ENCODE measurements at regions of chr9 and their contacts with region 1.

Region 1: DNA sequence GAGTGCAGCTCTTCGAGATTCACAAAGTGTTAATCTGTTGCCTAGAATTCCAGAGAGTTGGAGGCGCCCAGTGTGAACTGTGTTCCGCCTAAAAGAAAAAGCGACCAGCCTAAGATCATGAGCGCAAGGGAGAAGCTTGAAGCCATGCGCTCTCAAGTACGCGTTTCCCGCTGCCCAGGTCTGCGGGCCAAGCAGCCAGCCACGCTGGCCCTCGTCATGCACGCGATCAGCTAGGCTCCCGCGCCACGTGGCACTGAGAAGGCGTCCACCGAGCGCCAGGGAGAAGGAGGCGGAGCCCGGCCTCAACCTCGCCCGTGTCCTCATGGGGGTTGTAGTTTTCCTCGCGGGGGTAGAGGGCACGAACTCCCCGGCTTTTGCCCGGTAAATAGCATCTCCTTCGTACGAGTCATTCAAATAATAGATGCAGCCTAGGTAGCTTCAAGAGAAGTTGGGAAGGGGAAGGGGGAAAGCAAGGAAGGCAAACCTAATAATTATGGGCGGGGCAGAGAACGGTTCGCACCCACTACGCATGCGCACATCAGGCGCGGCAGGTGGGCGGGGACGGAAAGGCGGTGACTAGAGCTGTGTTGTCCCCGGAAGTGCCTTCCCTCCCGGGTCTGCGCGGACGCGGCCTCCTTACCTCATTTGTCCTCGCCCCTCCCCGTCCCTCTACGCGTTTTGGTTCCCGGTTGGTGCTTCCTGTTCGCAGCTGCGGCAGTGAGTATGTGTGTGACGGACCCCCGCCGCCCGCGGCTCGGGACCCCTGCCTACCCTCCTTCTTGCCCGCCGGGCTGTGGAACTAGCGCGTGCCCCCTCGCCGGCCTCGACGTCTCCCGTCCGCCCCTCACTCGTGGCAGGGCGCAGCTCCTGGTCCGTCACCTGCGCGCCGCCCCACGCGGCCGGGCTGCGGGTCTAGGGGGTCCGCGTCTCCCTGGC is at the start of gene ZCCHC7:
- DNase-seq: peak; percentile 98
- ATAC-seq: peak; percentile 98
- H3K4me3 Mint-ChIP-seq: peak within 1 kb of the TSS; percentile 89
- H3K27ac Mint-ChIP-seq: peak within 1 kb of the TSS; percentile 99
- H3K4me1 Mint-ChIP-seq: peaks cover 33% of the 10 kb centered on the region
- H3K27me3 Mint-ChIP-seq: no peaks in the 10 kb centered on the region
- CTCF ChIP-seq: no peak
- total RNA-seq, gene ZCCHC7: 32.9 to 37.0 TPM

Region 2: DNA sequence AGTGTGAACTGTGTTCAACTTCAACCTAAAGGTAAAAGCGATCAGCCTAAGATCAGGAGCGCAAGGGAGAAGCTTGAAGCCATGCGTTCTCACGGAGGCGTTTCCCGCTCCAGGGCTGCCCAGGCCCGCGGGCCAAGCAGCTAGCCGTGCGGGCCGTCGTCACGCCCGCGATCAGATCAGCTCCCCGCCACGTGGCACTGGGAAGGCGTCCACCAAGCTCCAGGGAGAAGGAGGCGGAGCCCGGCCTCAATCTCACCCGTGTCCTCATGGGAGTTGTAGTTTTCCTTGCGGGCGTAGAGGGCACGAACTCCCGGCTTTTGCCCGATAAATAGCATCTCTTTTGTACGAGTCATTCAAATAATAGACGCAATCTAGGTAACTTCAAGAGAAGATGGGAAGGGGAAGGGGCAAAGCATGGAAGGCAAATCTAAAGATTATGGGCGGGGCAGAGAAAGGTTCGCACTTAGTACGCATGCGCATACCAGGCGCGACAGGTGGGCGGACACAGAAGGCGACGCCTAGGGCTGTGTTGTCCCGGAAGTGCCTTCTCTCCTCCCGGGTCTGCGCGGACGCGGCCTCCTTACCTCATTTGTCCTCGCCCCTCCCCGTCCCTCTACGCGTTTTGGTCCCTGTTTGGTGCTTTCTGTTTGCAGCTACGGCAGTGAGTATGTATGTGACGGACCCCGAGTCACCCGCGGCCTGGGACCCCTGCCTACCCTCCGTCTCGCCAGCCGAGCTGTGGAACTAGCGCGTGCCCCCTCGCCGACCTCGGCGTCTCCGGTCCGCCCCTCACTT is 40.6 kb before region 1 on chr9:
- CTCF ChIA-PET with region 1: interaction called, 3 read pairs
- POLR2A ChIA-PET with region 1: interaction called, 14 read pairs
- intact Hi-C with region 1: no loop called
- DNase-seq: peak; percentile 98
- ATAC-seq: peak; percentile 98
- H3K4me3 Mint-ChIP-seq: peak overlapping the region; percentile 96
- H3K27ac Mint-ChIP-seq: peak overlapping the region; percentile 96
- H3K4me1 Mint-ChIP-seq: peaks cover 39% of the 10 kb centered on the region
- H3K27me3 Mint-ChIP-seq: peaks cover 3% of the 10 kb centered on the region
- CTCF ChIP-seq: no peak

Region 3: GRCh38 chr9:37144762-37145161 is 24.6 kb after region 1 on chr9:
- CTCF ChIA-PET with region 1: no interaction called
- POLR2A ChIA-PET with region 1: no interaction called
- intact Hi-C with region 1: no loop called
- DNase-seq: no peak
- ATAC-seq: no peak
- H3K4me3 Mint-ChIP-seq: no peak overlapping the region
- H3K27ac Mint-ChIP-seq: peak overlapping the region; percentile 64
- H3K4me1 Mint-ChIP-seq: peaks cover 42% of the 10 kb centered on the region
- H3K27me3 Mint-ChIP-seq: no peaks in the 10 kb centered on the region
- CTCF ChIP-seq: no peak

Region 4: GRCh38 chr9:37293664-37294524 is 173.7 kb after region 1 on chr9:
- CTCF ChIA-PET with region 1: no interaction called
- POLR2A ChIA-PET with region 1: interaction called, 3 read pairs
- intact Hi-C with region 1: loop called (anchors 10 kb)
- DNase-seq: no peak
- ATAC-seq: no peak
- H3K4me3 Mint-ChIP-seq: no peak overlapping the region
- H3K27ac Mint-ChIP-seq: peak overlapping the region; percentile 82
- H3K4me1 Mint-ChIP-seq: peaks cover 78% of the 10 kb centered on the region
- H3K27me3 Mint-ChIP-seq: no peaks in the 10 kb centered on the region
- CTCF ChIP-seq: no peak